Heart right ventricle (tissue), 16 donors: ENCODE measurements at regions of chr9 and their contacts with region 1.

Region 1: GRCh38 chr9:116661037-116661954 is 25.8 kb upstream of the TRIM32 start:
- DNase-seq: no peak
- ATAC-seq: peak; percentile 68 to 89 (median 80)
- H3K4me3 ChIP-seq: no peak overlapping the region
- H3K27ac ChIP-seq: no peak overlapping the region
- H3K4me1 ChIP-seq: peaks cover 0 to 17% (median 8%) of the 10 kb centered on the region in 9 donors
- H3K27me3 ChIP-seq: no peaks in the 10 kb centered on the region
- CTCF ChIP-seq: peak; percentile 42 to 78 (median 73)

Region 2: DNA sequence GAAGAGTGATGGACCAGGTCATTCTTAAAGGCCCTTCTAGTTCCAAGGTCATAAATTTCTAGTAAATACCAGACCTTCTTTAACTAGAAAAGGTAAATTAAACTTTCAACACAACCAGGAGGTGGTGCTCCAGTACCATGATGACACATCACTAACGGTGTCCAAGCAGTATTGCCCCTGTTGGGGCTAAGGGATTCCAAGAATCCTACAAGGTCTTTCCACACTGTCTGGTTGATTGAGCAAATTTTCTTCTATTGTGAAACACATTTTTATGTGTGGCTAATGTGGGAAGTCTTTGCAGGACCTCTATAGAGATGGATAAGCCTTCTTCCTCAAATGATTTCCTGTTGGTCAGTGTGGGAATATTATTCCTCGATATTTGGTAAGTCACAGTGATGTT is 967.3 kb before region 1 on chr9:
- intact Hi-C with region 1: loop called in 1 of 10 experiments (anchors 10 kb)
- DNase-seq: peak in 1 of 2 donors; percentile 6
- ATAC-seq: peak in 4 of 8 donors; percentile 17 to 88 (median 30)
- H3K4me3 ChIP-seq: no peak overlapping the region
- H3K27ac ChIP-seq: peak overlapping the region in 1 of 10 donors; percentile 56
- H3K4me1 ChIP-seq: peaks cover 0 to 10% (median 0%) of the 10 kb centered on the region in 9 donors
- H3K27me3 ChIP-seq: no peaks in the 10 kb centered on the region
- CTCF ChIP-seq: peak in 7 of 9 donors; percentile 12 to 42 (median 26)

Region 3: DNA sequence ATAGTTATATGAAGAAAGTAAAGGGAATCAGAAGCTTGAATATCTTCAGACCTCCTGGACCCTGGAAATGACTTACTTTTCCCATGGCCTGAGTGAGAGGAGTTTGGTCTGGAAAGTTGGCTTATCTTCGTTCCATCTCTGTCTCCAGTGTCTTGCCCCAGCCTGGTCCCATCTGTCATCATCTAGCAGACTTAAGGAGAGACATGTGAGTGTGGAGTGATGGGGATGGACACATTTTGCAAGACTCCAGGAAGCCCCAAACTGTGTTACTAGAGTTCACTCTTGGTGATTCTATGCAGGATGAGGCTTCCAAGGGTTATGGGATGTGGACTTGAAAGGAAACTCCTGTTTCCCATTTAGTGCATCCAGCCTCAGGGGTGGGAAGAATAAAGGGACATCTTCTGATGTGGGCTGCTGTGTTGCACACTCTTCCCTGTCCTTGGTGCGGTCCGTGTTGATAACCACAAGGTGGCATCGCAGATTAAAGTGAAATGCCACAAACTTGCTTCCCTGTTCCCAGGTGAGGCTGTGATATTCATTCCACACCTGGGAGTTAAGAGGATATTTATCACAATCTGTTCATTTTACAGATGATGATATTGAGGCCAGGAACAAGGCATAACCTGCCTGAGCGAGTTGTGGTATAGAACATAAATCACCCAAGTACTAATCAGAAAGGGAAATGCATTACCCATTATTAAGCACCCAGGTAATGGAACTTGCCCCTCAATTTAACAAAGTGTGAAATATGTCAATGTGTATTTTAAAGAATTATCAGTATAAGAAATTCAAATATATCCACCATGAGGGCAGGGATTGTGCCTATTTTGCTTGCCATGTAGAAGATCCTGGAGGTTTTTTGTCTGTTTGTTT is 777.6 kb before region 1 on chr9:
- intact Hi-C with region 1: loop called in 5 of 10 experiments (anchors 5 to 10 kb)
- DNase-seq: peak in 1 of 2 donors; percentile 13
- ATAC-seq: peak in 6 of 8 donors; percentile 43 to 81 (median 64)
- H3K4me3 ChIP-seq: no peak overlapping the region
- H3K27ac ChIP-seq: no peak overlapping the region
- H3K4me1 ChIP-seq: no peaks in the 10 kb centered on the region
- H3K27me3 ChIP-seq: no peaks in the 10 kb centered on the region
- CTCF ChIP-seq: peak; percentile 11 to 66 (median 57)

Region 4: GRCh38 chr9:116156621-116157314 is 504.5 kb before region 1 on chr9:
- intact Hi-C with region 1: loop called in 4 of 10 experiments (anchors 5 to 10 kb)
- DNase-seq: peak; percentile 63 to 79
- ATAC-seq: peak; percentile 84 to 98 (median 94)
- H3K4me3 ChIP-seq: peak overlapping the region in 9 of 10 donors; percentile 3 to 65 (median 43)
- H3K27ac ChIP-seq: peak overlapping the region; percentile 74 to 95 (median 87)
- H3K4me1 ChIP-seq: peaks cover 6 to 41% (median 20%) of the 10 kb centered on the region in 9 donors
- H3K27me3 ChIP-seq: peaks cover 0 to 60% (median 5%) of the 10 kb centered on the region in 7 donors
- CTCF ChIP-seq: no peak

Region 5: DNA sequence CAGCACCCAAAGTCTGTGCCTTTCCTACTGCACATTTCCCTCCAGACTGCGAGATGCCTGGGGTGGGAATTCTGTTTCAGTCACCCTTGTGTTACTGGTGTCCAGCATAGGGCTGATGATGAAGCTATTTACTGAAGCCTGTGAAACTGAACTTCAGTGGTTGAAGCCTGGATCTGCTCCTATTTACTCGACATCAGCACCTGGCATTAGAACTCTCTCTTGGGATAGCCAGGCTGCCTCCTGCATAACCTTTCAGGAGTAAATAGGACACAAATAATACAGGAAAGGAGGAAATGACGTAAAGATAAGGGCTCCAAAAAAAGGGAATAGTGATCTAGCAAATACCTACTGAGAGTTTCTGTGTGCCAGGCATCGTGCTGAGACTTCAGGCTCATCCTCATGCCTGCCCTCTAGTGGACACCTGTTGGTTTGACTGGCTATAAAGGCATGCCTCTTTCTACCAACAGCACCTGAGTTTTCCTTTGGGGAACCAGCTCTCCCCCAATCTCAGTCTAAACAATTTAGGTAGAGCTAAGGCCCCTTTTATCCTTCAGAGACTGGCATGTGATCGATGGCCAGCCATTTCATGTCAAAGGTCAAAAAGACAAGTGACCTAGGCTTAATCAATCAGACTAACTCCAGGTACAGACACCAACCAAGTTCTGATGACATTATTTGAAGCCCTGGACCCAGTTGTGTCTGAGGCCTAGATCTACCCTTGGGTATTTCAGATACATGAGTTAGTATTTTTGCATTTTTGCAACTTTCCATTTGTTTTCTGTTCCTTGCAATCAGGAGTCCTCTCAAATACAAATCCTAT is 166.3 kb before region 1 on chr9:
- intact Hi-C with region 1: loop called in 2 of 10 experiments (anchors 10 kb)
- DNase-seq: peak in 1 of 2 donors; percentile 9
- ATAC-seq: peak in 1 of 8 donors; percentile 37
- H3K4me3 ChIP-seq: no peak overlapping the region
- H3K27ac ChIP-seq: no peak overlapping the region
- H3K4me1 ChIP-seq: peaks cover 0 to 9% (median 0%) of the 10 kb centered on the region in 9 donors
- H3K27me3 ChIP-seq: no peaks in the 10 kb centered on the region
- CTCF ChIP-seq: peak; percentile 35 to 76 (median 66)

Region 6: GRCh38 chr9:116524778-116525470 is 136.4 kb before region 1 on chr9:
- intact Hi-C with region 1: no loop called
- DNase-seq: no peak
- ATAC-seq: no peak
- H3K4me3 ChIP-seq: no peak overlapping the region
- H3K27ac ChIP-seq: no peak overlapping the region
- H3K4me1 ChIP-seq: no peaks in the 10 kb centered on the region
- H3K27me3 ChIP-seq: no peaks in the 10 kb centered on the region
- CTCF ChIP-seq: no peak

Region 7: GRCh38 chr9:116812231-116813030 is 151.1 kb after region 1 on chr9:
- intact Hi-C with region 1: no loop called
- DNase-seq: no peak
- ATAC-seq: no peak
- H3K4me3 ChIP-seq: no peak overlapping the region
- H3K27ac ChIP-seq: no peak overlapping the region
- H3K4me1 ChIP-seq: no peaks in the 10 kb centered on the region
- H3K27me3 ChIP-seq: peaks cover 0 to 10% (median 0%) of the 10 kb centered on the region in 7 donors
- CTCF ChIP-seq: no peak